ENCODE measurements at regions of chr3 and their contacts with region 1.

Region 1: DNA sequence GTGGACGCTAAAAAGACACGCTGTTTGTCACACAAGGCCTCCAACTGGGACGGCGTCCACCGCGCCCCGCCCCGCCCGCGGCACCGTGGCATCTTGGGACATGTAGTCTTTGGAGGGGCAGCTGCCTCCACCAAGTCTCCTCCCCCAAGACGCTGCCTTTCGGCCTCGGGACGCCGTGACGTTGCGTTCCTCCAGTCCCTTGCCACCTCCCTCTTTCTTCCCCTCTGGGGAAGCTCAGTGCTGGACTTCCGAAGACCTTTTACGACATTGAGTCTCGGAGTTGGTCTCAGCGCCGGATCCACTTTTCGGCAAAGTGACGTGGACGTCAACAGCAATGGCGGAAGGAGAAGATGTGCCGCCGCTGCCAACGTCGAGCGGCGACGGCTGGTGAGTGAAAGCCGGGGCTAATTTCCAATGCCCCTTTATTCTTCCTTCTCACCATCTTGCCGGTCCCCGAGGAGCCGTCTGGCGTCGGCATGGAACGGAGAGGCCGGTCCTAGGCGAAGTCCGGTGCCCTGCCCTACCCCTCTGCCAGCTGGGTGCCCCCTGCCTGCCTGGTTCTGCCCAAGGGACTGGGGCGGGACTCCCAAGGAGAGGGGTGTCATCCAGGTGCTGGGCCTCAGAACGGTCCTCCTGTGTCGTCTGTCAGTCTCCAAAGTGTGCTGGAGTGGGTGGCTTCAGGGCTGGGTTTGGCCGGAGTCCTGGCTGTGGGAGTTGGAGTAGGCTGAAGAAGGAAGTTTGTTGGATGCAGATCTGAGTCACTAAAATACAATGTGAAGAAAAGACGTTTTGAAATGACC is at the start of gene TBC1D23:
- DNase-seq: peak; percentile 99
- H3K4me3 Mint-ChIP-seq: peak within 1 kb of the TSS; percentile 78
- H3K27ac Mint-ChIP-seq: peak within 1 kb of the TSS; percentile 95
- H3K4me1 Mint-ChIP-seq: peaks cover 45% of the 10 kb centered on the region
- H3K27me3 Mint-ChIP-seq: no peaks in the 10 kb centered on the region
- CTCF ChIP-seq: no peak
- total RNA-seq, gene TBC1D23: 34.5 and 34.8 TPM in 2 replicates

Region 2: DNA sequence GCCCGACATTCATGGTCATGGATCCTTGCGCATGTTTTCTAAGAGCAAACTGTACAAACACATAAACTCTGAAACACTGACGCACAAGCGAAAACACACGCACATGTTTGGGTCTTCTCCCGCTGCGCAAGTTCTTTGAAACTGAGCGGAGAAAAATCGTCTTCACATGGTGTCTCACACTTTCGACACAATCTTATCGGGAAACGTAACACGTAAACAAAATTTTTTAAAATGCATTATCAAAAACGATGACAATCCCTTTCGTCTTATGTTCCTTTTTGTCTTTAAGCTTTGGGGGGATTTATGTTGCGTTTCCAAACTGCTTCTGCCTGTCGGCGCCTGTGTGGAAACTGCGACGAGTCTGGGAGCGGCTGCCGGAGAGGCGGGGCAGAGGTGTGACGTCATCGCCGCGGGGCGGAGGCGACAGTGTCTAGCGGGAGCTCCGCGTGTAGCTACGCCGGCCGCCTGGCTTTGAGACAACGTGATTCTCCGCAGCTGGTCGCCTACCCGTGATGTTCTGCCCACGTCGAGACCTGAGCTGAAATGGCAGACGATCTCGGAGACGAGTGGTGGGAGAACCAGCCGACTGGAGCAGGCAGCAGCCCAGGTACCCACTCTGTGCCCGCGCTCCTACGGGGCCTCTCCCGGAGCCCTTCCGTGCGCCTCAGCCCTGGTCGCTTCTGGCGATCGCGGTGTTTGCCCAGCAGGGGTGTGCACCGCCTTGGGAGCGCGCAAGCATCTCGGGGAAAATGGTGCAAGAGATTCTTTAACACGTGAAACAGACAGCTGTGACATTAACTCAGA is 443.2 kb before region 1 on chr3 and contains the start of gene CMSS1:
- CTCF ChIA-PET with region 1: interaction called, 5 read pairs
- POLR2A ChIA-PET with region 1: interaction called, 11 read pairs
- intact Hi-C with region 1: no loop called
- DNase-seq: peak; percentile 90
- H3K4me3 Mint-ChIP-seq: peak within 1 kb of the TSS; percentile 95
- H3K27ac Mint-ChIP-seq: peak within 1 kb of the TSS; percentile 99
- H3K4me1 Mint-ChIP-seq: peaks cover 18% of the 10 kb centered on the region
- H3K27me3 Mint-ChIP-seq: no peaks in the 10 kb centered on the region
- CTCF ChIP-seq: peak; percentile 28
- total RNA-seq, gene CMSS1: 79.7 and 117 TPM in 2 replicates

Region 3: GRCh38 chr3:99825004-99825640 is 435.8 kb before region 1 on chr3:
- CTCF ChIA-PET with region 1: interaction called, 139 read pairs
- POLR2A ChIA-PET with region 1: interaction called, 27 read pairs
- intact Hi-C with region 1: no loop called
- DNase-seq: no peak
- H3K4me3 Mint-ChIP-seq: peak overlapping the region; percentile 4
- H3K27ac Mint-ChIP-seq: no peak overlapping the region
- H3K4me1 Mint-ChIP-seq: peaks cover 18% of the 10 kb centered on the region
- H3K27me3 Mint-ChIP-seq: no peaks in the 10 kb centered on the region
- CTCF ChIP-seq: no peak

Region 4: DNA sequence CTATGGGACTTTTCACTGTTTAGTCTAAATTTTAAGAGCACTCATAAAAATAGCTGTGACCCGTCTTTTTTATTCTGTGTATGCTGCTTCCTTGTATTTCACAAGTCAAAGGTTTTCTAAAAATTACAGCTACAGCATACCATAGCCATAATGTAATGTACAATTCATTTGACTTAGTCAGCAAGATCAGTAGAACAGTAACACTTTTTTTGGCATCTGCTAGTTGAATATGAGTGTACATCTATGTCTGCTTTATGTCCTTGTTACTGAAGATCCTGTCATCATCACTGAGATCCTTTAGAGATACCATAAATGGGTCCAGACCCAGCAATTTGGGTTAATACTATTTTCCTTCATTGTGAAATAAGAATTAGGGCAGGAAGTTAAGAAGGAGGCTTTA is 401.1 kb before region 1 on chr3:
- CTCF ChIA-PET with region 1: no interaction called
- POLR2A ChIA-PET with region 1: interaction called, 15 read pairs
- intact Hi-C with region 1: no loop called
- DNase-seq: peak; percentile 58
- H3K4me3 Mint-ChIP-seq: no peak overlapping the region
- H3K27ac Mint-ChIP-seq: peak overlapping the region; percentile 69
- H3K4me1 Mint-ChIP-seq: peaks cover 35% of the 10 kb centered on the region
- H3K27me3 Mint-ChIP-seq: no peaks in the 10 kb centered on the region
- CTCF ChIP-seq: no peak

Region 5: GRCh38 chr3:100334488-100335351 is 73.8 kb after region 1 on chr3 and contains the start of gene NIT2:
- CTCF ChIA-PET with region 1: no interaction called
- POLR2A ChIA-PET with region 1: interaction called, 10 read pairs
- intact Hi-C with region 1: no loop called
- DNase-seq: peak; percentile 82
- H3K4me3 Mint-ChIP-seq: peak within 1 kb of the TSS; percentile 85
- H3K27ac Mint-ChIP-seq: peak within 1 kb of the TSS; percentile 82
- H3K4me1 Mint-ChIP-seq: peaks cover 5% of the 10 kb centered on the region
- H3K27me3 Mint-ChIP-seq: no peaks in the 10 kb centered on the region
- CTCF ChIP-seq: no peak
- total RNA-seq, gene NIT2: 37.0 and 42.6 TPM in 2 replicates